ENCODE measurements at regions of chr9 and their contacts with region 1.

Region 1: DNA sequence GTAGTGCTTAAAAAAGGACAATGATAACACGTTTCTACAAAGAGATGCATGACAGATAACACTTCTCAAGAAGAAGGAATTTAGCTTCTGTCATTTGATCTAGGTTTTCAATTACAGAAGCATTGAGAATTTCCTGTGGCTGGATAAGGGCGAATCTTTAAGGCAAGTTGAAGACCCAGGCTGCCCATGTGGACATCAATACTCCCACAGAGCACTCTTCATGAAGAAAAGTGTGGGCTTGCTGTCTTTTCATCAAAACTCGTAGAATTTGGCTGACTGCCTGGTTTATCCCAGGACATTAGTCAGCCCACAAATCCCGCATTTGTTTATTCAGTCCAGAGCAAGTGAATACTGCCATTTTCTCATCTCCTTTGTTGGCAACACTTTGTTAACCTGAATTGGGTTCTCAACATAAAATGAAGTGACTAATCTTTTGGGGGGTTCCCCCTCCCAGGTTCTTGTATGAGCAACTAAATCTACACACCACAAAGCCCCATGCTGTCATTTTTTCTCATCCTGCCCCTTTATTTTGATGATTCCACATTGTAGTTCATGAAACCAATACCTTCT is 43.4 kb upstream of the CDKN2B start:
- DNase-seq: no peak
- ATAC-seq: no peak
- H3K4me3 ChIP-seq: no peak overlapping the region
- H3K4me3 Mint-ChIP-seq: no peak overlapping the region
- H3K27ac ChIP-seq: no peak overlapping the region
- H3K27ac Mint-ChIP-seq: no peak overlapping the region
- H3K4me1 ChIP-seq: peaks cover 17 to 23% of the 10 kb centered on the region in 2 donors
- H3K4me1 Mint-ChIP-seq: peaks cover 28% of the 10 kb centered on the region
- H3K27me3 ChIP-seq: no peaks in the 10 kb centered on the region
- H3K27me3 Mint-ChIP-seq: no peaks in the 10 kb centered on the region
- CTCF ChIP-seq: no peak

Region 2: GRCh38 chr9:22037954-22038690 is 14.3 kb before region 1 on chr9:
- CTCF ChIA-PET with region 1: interaction called, 13 read pairs
- POLR2A ChIA-PET with region 1: no interaction called
- intact Hi-C with region 1: no loop called
- DNase-seq: peak; percentile 25
- ATAC-seq: no peak
- H3K4me3 ChIP-seq: no peak overlapping the region
- H3K4me3 Mint-ChIP-seq: no peak overlapping the region
- H3K27ac ChIP-seq: no peak overlapping the region
- H3K27ac Mint-ChIP-seq: no peak overlapping the region
- H3K4me1 ChIP-seq: no peaks in the 10 kb centered on the region
- H3K4me1 Mint-ChIP-seq: no peaks in the 10 kb centered on the region
- H3K27me3 ChIP-seq: no peaks in the 10 kb centered on the region
- H3K27me3 Mint-ChIP-seq: no peaks in the 10 kb centered on the region
- CTCF ChIP-seq: peak; percentile 77

Region 3: GRCh38 chr9:22198681-22199080 is 146.2 kb after region 1 on chr9:
- CTCF ChIA-PET with region 1: no interaction called
- POLR2A ChIA-PET with region 1: no interaction called
- intact Hi-C with region 1: loop called (anchors 10 kb)
- DNase-seq: no peak
- ATAC-seq: no peak
- H3K4me3 ChIP-seq: peak overlapping the region in 1 of 5 experiments; percentile 21
- H3K4me3 Mint-ChIP-seq: peak overlapping the region; percentile 6
- H3K27ac ChIP-seq: no peak overlapping the region
- H3K27ac Mint-ChIP-seq: no peak overlapping the region
- H3K4me1 ChIP-seq: peaks cover 38 to 43% of the 10 kb centered on the region in 2 donors
- H3K4me1 Mint-ChIP-seq: peaks cover 55% of the 10 kb centered on the region
- H3K27me3 ChIP-seq: no peaks in the 10 kb centered on the region
- H3K27me3 Mint-ChIP-seq: no peaks in the 10 kb centered on the region
- CTCF ChIP-seq: no peak

Measured in B cell (primary cell).